ENCODE measurements at regions of chr9 and their contacts with region 1.

Region 1: DNA sequence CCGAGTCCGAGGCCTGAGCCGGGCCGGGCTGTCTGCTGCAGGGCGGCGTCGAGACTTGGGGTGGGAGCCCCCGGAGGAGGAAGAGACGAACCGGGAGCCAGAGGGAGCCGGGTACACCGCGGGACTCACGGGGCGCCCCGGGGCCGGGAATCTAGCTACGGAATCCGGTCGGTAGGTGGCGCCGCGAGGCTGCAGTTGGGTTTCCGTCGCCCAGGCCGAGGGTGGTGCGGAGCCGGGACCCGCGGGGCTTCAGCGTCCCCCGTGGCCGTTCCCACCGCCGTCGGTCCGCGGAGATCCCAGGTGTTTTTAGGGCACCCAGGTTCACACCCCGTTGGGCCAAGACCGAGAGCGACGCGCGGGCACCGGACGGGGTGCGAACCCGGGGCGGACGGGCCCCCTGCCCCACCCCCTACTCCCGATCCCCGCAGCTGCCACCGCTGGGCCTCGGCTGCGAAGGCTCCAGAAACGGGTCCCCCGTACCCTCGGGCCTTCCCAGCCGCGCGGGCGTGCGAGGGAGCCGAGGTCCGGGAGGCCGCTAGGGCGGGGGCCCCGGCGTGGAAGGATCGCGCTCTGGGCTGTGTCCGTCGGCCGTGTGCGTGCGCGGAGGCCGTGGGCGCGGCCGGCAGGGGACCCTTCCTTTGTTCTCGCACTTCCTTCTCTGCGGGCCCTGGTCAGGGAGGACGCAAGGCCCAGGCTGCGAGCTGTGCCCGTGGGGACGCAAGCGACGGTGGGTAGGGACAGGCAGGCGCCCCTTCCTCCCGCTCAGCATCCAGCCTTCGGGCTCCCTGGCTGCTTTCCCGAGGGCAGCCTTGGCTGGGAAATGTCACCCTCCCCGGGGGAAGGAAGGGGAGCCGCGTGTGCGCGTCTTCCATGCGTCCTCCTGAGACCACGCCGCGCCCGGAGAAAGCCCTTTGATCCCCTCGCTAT is 146.6 kb downstream of the GAPVD1 start:
- DNase-seq: peak; percentile 78
- ATAC-seq: peak; percentile 85
- H3K4me3 Mint-ChIP-seq: peak overlapping the region; percentile 38
- H3K27ac Mint-ChIP-seq: no peak overlapping the region
- H3K4me1 Mint-ChIP-seq: peaks cover 12% of the 10 kb centered on the region
- H3K27me3 Mint-ChIP-seq: peaks cover 22% of the 10 kb centered on the region

Region 2: DNA sequence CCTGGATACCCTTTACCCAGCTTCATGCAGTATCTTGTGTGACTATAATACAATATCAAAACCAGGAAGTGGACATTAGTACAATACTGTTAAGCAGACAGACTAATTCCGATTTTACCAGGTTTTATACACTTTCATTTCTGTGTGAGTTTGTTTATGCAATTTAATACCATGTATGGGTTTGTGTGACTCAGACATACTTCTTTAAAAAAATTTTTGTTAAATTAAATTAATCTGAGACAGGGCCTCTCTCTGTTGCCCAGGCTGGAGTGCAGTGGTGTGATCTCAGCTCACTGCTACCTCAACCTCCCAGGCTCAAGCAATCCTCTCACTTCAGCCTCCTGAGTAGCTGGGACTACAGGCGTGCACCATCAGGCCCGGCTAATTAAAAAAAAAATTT is 10.2 kb after region 1 on chr9:
- CTCF ChIA-PET with region 1: interaction called, 17 read pairs
- DNase-seq: no peak
- ATAC-seq: no peak
- H3K4me3 Mint-ChIP-seq: no peak overlapping the region
- H3K27ac Mint-ChIP-seq: no peak overlapping the region
- H3K4me1 Mint-ChIP-seq: no peaks in the 10 kb centered on the region
- H3K27me3 Mint-ChIP-seq: no peaks in the 10 kb centered on the region

Region 3: DNA sequence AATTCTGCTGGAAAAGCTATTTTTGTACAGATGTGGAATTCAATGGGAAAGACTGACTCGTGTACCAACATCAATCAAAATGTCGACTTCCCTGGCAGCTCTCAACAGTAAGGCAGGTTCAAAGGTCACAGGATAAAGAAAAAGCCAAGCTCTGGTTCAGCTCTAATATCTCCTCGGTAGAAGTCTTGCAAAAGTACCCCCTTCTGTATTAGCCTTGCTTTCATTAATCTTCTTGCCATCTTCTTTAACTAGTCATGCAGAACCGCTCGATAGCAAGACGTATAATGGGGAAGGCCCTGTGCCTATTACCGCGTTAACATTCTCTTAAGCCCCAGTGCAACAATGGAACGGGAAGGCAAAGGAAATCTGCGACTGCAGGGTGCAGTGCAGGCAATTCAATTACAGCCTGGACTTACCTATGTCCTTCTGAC is 54.6 kb after region 1 on chr9:
- CTCF ChIA-PET with region 1: interaction called, 10 read pairs
- DNase-seq: no peak
- ATAC-seq: no peak
- H3K4me3 Mint-ChIP-seq: no peak overlapping the region
- H3K27ac Mint-ChIP-seq: no peak overlapping the region
- H3K4me1 Mint-ChIP-seq: peaks cover 5% of the 10 kb centered on the region
- H3K27me3 Mint-ChIP-seq: no peaks in the 10 kb centered on the region

Region 4: DNA sequence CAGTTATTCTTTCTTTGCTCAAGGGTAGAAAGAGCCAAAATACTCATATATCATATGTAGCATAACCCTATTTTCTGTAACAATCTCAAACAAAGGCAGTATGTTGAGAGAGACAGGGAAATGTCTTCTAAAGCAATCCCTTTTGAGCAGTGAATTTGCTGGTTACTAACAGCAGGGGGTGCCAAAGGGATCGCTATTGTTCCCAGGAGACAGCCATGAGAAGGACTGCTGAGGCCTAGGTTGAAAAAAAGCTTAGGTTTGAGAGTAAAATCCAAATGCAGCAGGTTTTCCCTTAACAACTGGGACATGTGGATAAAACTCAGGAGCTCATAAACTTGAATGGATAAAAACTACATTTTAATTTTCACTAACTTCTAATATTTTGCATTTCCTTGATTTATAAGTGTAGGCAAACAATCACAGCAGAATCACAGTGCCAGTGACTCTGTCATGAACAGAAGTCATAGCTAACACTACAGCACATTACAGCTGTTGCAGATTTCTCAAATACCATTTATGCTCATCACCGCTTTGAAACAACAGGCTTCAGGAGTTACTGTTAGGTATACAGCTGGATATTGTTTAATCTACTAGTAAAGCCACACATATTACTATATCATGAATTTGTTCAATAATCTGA is 150.3 kb after region 1 on chr9:
- CTCF ChIA-PET with region 1: interaction called, 10 read pairs
- DNase-seq: peak; percentile 68
- ATAC-seq: peak; percentile 72
- H3K4me3 Mint-ChIP-seq: no peak overlapping the region
- H3K27ac Mint-ChIP-seq: no peak overlapping the region
- H3K4me1 Mint-ChIP-seq: peaks cover 20% of the 10 kb centered on the region
- H3K27me3 Mint-ChIP-seq: no peaks in the 10 kb centered on the region